ENCODE measurements at regions of chr2 and their contacts with region 1.

Region 1: DNA sequence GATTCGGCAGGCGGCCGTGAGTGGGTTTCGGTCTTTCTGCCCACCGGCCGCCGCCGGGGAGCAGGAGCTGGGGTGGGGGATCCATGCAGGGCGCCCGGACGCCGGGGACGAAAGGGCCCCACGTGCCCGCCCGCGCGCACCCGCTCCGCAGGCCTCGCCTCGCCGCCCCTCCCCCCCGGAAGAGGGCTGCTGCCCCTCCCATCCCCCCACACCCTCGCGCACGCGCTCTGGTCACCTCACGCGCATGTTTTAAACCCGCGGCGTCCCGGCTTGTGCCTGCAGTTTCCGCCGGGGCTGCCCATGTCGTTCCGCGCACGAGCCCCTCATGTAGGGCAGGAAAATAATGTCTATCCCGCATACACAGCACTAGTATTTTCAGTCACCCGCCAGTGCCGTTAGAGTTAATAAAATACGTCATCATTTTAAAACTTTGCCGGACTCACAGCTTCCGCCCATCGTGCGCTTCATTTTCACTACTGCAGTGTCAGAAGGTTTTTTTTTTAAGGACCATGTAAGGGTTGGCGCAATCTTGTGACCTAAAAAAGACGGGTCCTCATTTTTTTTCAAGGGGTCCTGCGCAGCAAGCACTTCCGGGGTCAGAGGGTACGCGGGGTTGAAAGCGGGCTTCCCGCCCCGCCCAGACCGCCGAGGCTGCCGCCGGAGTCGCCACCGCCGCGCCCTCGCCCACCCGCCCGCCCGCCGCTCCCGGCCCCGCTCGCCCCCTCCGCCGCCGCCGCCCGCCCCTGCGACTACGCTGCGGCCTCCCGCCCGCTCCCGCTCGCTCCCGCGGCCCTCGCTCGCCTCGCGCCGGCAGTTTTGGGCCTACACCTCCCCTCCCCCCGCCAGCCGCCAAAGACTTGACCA is at the start of gene PCBP1:
- DNase-seq: peak; percentile 73 to 95
- H3K4me3 ChIP-seq: peak within 1 kb of the TSS; percentile 83 to 99 (median 98)
- H3K27ac ChIP-seq: peak within 1 kb of the TSS; percentile 100
- H3K4me1 ChIP-seq: peaks cover 6 to 18% (median 15%) of the 10 kb centered on the region in 4 experiments; a peak in 5 of 7 replicates
- H3K27me3 ChIP-seq: no peaks in the 10 kb centered on the region
- CTCF ChIP-seq: no peak
- EP300 ChIP-seq: peak in 1 of 2 experiments; percentile 8; a peak in 1 of 3 replicates
- POLR2A ChIP-seq: peak; percentile 90 to 95
- RAD21 ChIP-seq: 0 out of 4 replicates have a peak, but pooled peaks of 1 of the 2 experiments have one; percentile 8
- total RNA-seq, gene PCBP1: 493 and 511 TPM in 2 replicates

Region 2: DNA sequence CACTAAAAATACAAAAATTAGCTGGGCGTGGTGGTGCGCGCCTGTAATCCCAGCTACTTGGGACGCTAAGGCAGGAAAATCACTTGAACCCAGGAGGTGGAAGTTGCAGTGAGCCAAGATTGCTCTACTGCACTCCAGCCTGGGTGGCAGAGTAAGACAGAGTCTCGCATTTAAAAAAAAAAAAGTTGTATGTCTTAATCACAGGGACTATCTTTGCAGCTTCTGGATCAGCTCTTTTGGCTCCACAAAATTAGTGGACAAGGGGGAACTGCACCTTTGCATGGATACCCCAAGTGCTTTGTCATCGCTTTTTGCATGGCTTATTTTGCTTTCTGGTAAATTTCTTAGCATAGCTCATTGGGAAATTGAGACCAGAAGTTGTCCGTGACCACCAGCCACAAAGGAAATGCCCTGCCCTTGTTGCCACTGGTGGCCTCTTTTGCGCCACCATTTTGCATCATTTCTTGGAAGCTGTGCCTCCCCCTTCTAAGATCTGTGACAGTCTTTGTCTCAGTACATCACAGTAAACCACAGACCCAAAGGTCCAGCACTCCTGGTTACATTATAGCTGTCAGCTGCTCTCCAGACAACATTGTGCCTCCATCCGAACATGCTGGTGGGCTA is 43.7 kb before region 1 on chr2:
- CTCF ChIA-PET with region 1: no interaction called
- POLR2A ChIA-PET with region 1: interaction called, 10 read pairs
- DNase-seq: no peak
- H3K4me3 ChIP-seq: no peak overlapping the region
- H3K27ac ChIP-seq: no peak overlapping the region
- H3K4me1 ChIP-seq: no peaks in the 10 kb centered on the region
- H3K27me3 ChIP-seq: no peaks in the 10 kb centered on the region
- CTCF ChIP-seq: no peak
- EP300 ChIP-seq: no peak
- POLR2A ChIP-seq: no peak
- RAD21 ChIP-seq: no peak

Region 3: GRCh38 chr2:70124983-70125480 is 38.0 kb after region 1 on chr2:
- CTCF ChIA-PET with region 1: interaction called, 14 read pairs
- POLR2A ChIA-PET with region 1: interaction called, 1,553 read pairs
- DNase-seq: peak in 1 of 2 experiments; percentile 75
- H3K4me3 ChIP-seq: peak overlapping the region; percentile 52 to 89 (median 74)
- H3K27ac ChIP-seq: peak overlapping the region; percentile 97
- H3K4me1 ChIP-seq: peaks cover 7 to 18% (median 10%) of the 10 kb centered on the region in 4 experiments
- H3K27me3 ChIP-seq: no peaks in the 10 kb centered on the region; a peak in 1 of 7 replicates
- CTCF ChIP-seq: no peak
- EP300 ChIP-seq: no peak
- POLR2A ChIP-seq: peak; percentile 50 to 97
- RAD21 ChIP-seq: no peak

Region 4: GRCh38 chr2:70190418-70191243 is 103.6 kb after region 1 on chr2 and contains the start of gene C2orf42:
- CTCF ChIA-PET with region 1: no interaction called
- POLR2A ChIA-PET with region 1: interaction called, 13 read pairs
- DNase-seq: peak; percentile 92
- H3K4me3 ChIP-seq: peak within 1 kb of the TSS; percentile 71 to 97 (median 74)
- H3K27ac ChIP-seq: peak within 1 kb of the TSS; percentile 77
- H3K4me1 ChIP-seq: no peaks in the 10 kb centered on the region
- H3K27me3 ChIP-seq: no peaks in the 10 kb centered on the region
- CTCF ChIP-seq: peak in 2 of 3 experiments; percentile 7 to 19; a peak in 2 of 4 replicates
- EP300 ChIP-seq: no peak
- POLR2A ChIP-seq: peak; percentile 90 to 96
- RAD21 ChIP-seq: peak; percentile 4 to 13; a peak in 2 of 4 replicates
- total RNA-seq, gene C2orf42: 9.4 and 10.7 TPM in 2 replicates

Measured in H1 (cell line).